ENCODE measurements at regions of chr13 and their contacts with region 1.

Region 1: DNA sequence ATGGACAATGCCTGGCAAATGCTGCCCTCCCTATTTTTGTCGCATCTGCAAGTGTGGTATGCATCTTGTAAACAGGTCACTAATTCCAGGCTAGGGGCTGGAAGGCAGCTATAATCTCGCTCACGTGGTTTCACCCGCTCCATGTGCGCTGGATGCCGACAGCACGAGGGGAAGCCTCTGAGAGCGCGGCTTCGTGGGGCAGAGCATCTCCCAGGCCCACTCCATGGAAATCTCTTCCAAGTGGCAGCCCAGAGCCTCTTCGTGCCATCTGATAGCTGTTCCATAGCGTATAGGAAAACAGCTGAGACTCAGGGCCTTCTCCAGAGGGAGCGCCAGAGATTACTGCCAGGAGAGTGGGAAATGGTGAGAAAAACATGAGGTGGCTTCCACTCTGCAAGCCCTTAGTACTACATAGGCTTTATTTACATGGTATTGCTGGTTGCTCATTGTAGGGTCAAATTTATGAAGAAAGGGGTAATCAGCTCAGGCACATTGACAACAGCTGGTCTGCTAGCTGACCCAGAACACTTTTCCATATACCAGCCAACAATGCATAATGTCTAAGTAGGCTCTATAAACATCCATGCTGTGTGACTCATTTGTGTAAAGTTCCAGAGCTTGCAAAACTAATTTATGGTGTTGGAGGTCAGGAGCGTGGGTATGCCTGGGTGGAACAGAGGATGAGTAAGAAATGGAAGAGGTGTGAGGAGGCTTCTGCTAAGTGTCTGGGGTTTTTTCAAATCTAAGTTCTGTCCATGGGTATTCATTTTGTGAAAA is 165.2 kb downstream of the SHISA2 start:
- DNase-seq: peak; percentile 91
- ATAC-seq: peak; percentile 97
- H3K4me3 ChIP-seq: no peak overlapping the region
- H3K27ac ChIP-seq: peak overlapping the region; percentile 81
- H3K4me1 ChIP-seq: peaks cover 20% of the 10 kb centered on the region
- H3K27me3 ChIP-seq: no peaks in the 10 kb centered on the region
- CTCF ChIP-seq: peak; percentile 21; the same call in 1 of the 2 replicates

Region 2: GRCh38 chr13:25752957-25753551 is 133.6 kb before region 1 on chr13:
- CTCF ChIA-PET with region 1: no interaction called
- POLR2A ChIA-PET with region 1: no interaction called
- intact Hi-C with region 1: loop called (anchors 10 kb)
- DNase-seq: peak; percentile 92
- ATAC-seq: peak; percentile 100
- H3K4me3 ChIP-seq: no peak overlapping the region
- H3K27ac ChIP-seq: peak overlapping the region; percentile 78
- H3K4me1 ChIP-seq: peaks cover 17% of the 10 kb centered on the region
- H3K27me3 ChIP-seq: no peaks in the 10 kb centered on the region
- CTCF ChIP-seq: no peak

Region 3: DNA sequence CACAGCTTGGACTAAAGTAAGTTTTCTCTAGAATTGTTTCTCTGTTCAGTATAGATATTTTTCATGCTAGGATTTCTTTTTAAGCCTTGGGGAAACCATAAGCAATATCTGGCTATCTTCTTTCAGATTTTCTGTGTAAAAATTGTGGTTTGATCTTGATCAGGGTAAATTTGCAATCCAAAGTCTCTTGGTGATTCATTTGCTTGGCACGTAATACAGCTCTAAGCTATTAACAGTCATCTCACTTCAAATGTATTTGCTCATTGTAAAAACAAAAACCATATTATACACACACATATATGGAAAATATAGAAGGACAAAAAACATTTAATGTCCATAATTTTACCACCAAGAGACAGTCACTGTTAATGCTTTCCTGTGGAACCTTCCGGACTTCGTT is 25.8 kb before region 1 on chr13:
- CTCF ChIA-PET with region 1: no interaction called
- POLR2A ChIA-PET with region 1: interaction called, 7 read pairs
- intact Hi-C with region 1: loop called (anchors 1 kb)
- DNase-seq: peak; percentile 87
- ATAC-seq: peak; percentile 72
- H3K4me3 ChIP-seq: no peak overlapping the region; the same call in 1 of the 2 replicates
- H3K27ac ChIP-seq: peak overlapping the region; percentile 89
- H3K4me1 ChIP-seq: peaks cover 47% of the 10 kb centered on the region
- H3K27me3 ChIP-seq: no peaks in the 10 kb centered on the region
- CTCF ChIP-seq: no peak

Region 4: DNA sequence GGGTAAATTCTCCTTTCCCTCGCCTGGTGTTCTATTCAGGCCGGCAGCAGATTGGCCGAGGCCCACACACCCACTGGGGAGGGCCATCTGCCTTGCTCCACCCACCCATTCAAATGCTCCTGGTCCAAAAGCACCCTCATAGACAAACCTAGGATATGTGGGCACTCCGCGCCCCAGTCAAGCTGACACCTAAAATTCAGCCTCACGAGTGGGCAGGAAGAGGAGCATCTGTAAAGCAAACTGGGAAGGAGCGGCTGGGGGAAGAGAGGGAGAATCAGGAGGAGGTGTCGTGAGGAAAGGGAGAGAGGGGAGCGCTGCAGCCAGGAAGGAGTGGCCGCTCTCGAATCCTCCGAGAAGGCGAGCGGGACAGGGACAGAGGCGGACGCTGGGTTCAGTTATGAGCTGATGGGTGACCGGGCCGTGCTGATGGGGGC is 1148.1 kb after region 1 on chr13:
- CTCF ChIA-PET with region 1: no interaction called
- POLR2A ChIA-PET with region 1: no interaction called
- intact Hi-C with region 1: no loop called
- DNase-seq: no peak
- ATAC-seq: no peak
- H3K4me3 ChIP-seq: no peak overlapping the region
- H3K27ac ChIP-seq: no peak overlapping the region
- H3K4me1 ChIP-seq: peaks cover 45% of the 10 kb centered on the region
- H3K27me3 ChIP-seq: no peaks in the 10 kb centered on the region
- CTCF ChIP-seq: no peak

Measured in PC-3 (cell line).